IMR-90 (cell line): ENCODE measurements at regions of chr16 and their contacts with region 1.

Region 1: GRCh38 chr16:18801197-18801972 is at the start of gene ARL6IP1:
- DNase-seq: peak; percentile 99
- ATAC-seq: peak; percentile 97
- H3K4me3 ChIP-seq: peak within 1 kb of the TSS; percentile 70
- H3K27ac ChIP-seq: peak within 1 kb of the TSS; percentile 67
- H3K4me1 ChIP-seq: peaks cover 2% of the 10 kb centered on the region
- H3K27me3 ChIP-seq: no peaks in the 10 kb centered on the region
- CTCF ChIP-seq: peak; percentile 94
- POLR2A ChIP-seq: peak; percentile 100
- RAD21 ChIP-seq: peak; percentile 49
- total RNA-seq, gene ARL6IP1: 190 and 614 TPM in 2 replicates

Region 2: DNA sequence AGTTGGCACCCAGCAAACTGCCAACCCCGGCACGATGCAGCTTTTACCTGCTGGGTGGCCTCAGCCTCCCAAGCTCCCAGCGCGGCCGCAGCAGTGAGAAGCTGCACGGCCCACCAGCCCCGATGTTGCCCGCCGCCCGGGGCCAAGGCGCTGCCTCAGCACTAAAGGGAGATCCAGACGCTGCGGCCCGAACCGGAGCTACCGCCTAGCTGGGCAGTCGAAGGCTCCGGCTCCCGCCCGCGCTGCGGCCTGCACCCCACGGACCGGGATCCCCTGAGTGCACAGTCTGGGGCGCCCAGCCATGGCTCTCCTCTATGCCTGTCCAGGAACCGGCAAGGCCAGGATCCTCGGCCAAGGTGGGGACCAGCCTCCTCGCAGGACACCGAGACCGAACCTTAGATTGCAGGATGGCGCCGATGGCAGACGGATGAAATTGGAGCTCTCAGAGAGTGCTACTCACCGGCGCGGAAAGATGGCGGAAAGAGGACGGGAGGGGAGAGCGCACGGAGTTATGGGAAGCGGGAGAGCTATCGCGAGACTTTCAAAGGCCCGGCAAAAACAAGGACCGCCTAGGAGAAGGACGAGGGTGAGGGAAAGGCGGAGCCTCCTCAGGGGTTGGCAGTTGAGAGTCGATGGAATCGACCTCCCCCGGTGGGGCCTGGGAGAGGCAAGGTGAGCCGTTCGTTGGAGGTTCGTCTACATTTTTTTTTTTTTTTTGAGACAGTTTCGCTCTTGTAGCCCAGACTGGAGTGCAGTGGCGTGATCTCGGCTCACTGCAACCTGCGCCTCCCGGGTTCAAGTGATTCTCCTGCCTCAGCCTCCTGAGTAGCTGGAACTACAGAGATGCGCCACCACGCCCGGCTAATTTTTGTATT is 11.3 kb before region 1 on chr16 and contains the start of gene RPS15A:
- CTCF ChIA-PET with region 1: interaction called, 9 read pairs
- POLR2A ChIA-PET with region 1: interaction called, 8 read pairs
- dilution Hi-C with region 1: no loop called
- in situ Hi-C with region 1: no loop called
- intact Hi-C with region 1: loop called (anchors 1 kb)
- DNase-seq: peak; percentile 98
- ATAC-seq: peak; percentile 99
- H3K4me3 ChIP-seq: peak within 1 kb of the TSS; percentile 72
- H3K27ac ChIP-seq: peak within 1 kb of the TSS; percentile 81
- H3K4me1 ChIP-seq: peaks cover 2% of the 10 kb centered on the region; the same call in 1 of the 2 replicates
- H3K27me3 ChIP-seq: no peaks in the 10 kb centered on the region
- CTCF ChIP-seq: no peak
- POLR2A ChIP-seq: peak; percentile 97
- RAD21 ChIP-seq: no peak
- total RNA-seq, gene RPS15A: 2,973 and 4,619 TPM in 2 replicates

Region 3: DNA sequence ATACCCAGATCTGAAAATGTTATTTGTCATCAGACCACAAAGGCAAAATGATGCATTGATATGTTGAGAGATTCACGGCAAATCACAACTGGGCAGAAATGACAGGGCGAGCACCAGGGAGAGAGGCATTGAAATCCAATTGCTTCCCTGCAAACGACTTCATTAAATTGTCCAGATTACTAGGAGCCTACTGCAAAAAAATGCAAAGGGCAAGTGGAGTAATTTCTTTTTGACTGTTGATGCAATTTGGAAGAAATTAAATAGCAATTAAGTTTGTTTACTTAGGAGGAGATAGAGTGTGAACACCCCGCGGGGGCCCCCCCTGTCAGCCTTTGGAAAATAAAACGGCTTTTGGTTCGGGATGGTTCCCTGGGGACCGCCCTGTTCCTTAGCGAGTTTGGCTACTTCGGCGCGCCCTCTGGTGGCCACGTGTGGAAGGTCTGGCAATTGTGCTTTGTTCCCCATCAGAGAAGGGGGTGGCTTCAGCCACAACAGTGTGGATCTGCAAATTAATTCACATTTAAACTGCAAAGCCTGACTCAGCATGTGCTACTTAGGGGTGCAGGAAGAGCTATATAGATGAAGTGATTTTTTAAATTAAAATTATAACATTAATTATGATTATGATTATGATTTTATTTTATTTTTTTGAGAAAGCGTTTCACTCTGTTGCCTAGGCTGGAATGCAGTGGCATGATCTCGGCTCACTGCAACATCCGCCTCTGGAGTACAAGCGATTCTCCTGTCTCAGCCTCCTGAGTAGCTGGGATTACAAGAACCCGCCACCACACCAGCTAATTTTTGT is 167.9 kb after region 1 on chr16:
- CTCF ChIA-PET with region 1: interaction called, 3 read pairs
- POLR2A ChIA-PET with region 1: interaction called, 8 read pairs
- dilution Hi-C with region 1: no loop called
- in situ Hi-C with region 1: no loop called
- intact Hi-C with region 1: loop called (anchors 1 kb)
- DNase-seq: peak; percentile 49
- ATAC-seq: peak; percentile 100
- H3K4me3 ChIP-seq: peak overlapping the region; percentile 28; the same call in 1 of the 2 replicates
- H3K27ac ChIP-seq: no peak overlapping the region
- H3K4me1 ChIP-seq: no peaks in the 10 kb centered on the region
- H3K27me3 ChIP-seq: no peaks in the 10 kb centered on the region
- CTCF ChIP-seq: peak; percentile 84
- POLR2A ChIP-seq: no peak
- RAD21 ChIP-seq: peak; percentile 79

Region 4: DNA sequence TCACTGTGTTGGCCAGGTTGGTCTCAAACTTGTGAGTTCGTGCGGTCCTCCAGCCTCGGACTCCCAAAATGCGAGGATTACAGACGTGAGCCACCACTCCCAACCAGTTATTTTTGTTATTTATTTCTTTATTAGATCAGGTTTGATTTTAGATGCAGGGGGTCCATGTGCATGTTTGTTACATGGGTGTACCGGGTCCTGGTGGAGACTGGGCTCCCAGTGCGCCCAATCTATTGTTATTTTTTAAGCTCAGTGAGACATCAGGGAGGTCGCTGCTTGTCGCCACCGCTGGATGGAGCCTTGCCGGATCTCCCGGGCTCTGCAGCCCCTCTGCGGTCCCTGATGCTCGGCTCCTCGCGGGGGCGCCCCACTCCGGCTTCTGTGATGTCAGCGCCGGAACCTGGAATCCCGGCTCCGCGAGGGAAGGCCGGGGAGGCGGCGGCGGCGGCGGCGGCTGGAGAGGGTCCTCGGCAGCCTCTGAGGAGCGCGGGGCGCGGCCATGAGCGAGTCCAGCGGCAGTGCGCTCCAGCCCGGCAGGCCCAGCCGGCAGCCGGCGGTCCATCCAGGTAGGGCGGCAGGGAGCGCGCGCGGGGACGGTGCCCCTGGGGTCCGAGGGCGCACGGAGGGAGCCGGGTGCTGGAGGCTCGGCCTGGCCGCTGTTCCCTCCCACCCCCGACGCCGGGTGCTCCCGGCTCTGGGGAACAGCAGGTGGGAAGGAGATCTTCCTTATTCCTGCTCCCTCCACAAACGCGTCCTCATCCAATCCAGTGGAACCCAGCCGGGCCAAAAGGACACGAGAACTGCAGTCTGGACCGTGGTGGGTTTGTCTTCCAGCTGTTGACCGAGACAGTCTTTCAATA is 182.4 kb after region 1 on chr16 and contains the start of gene TMC7:
- CTCF ChIA-PET with region 1: no interaction called
- POLR2A ChIA-PET with region 1: no interaction called
- dilution Hi-C with region 1: no loop called
- in situ Hi-C with region 1: no loop called
- intact Hi-C with region 1: no loop called
- DNase-seq: peak; percentile 79
- ATAC-seq: peak; percentile 99
- H3K4me3 ChIP-seq: peak within 1 kb of the TSS; percentile 66
- H3K27ac ChIP-seq: no peak within 1 kb of the TSS; the same call in 1 of the 2 replicates
- H3K4me1 ChIP-seq: peaks cover 2% of the 10 kb centered on the region; the same call in 1 of the 2 replicates
- H3K27me3 ChIP-seq: no peaks in the 10 kb centered on the region; the same call in 1 of the 2 replicates
- CTCF ChIP-seq: peak; percentile 97
- POLR2A ChIP-seq: 0 out of 2 replicates have a peak, but pooled peaks have one; percentile 29
- RAD21 ChIP-seq: peak; percentile 82
- total RNA-seq, gene TMC7: 0.28 and 0.36 TPM in 2 replicates

Region 5: DNA sequence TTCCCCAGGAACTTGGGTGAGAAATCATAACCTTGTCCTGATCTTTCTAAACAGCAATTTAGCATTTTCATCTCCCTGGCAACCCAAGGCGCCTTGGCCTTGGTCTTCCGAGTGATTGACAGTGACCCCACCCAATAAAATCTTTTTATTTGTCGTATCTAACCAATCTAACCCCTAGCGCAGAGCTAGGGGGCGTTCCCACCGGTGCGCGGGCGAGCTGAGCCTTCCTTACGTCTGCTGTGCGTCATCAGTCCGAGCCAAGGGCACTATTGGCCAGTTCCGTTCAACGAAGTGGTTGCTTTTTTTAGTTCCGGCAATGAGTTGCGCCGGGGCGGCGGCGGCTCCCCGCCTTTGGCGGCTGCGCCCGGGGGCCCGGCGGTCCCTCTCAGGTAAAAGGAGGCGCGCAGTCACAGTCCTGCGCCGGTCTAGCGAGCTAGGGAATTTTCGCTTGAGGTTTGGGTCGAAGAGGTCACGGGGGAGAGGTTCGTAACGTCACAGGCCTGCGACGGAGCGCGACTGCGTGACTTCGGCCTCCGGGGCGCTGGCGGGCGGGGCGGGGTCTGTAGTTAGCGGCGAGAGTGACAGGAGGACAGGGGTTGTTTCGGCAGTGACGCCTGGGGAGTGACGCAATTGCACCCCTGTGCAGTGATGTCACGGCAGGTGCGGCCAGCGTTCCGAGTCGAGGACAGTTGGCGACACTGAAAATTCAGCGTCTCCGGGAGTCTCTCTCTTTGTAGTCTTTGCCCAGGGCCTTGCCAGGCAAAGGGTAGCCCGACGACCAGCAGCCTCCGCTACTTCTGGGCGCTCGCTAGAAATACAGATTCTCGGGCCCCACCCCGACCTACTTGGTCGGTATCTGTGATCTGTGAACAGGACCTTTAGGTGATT is 266.2 kb after region 1 on chr16 and contains the start of gene COQ7:
- CTCF ChIA-PET with region 1: no interaction called
- POLR2A ChIA-PET with region 1: no interaction called
- dilution Hi-C with region 1: no loop called
- in situ Hi-C with region 1: no loop called
- intact Hi-C with region 1: loop called (anchors 10 kb)
- DNase-seq: peak; percentile 100
- ATAC-seq: peak; percentile 98
- H3K4me3 ChIP-seq: peak within 1 kb of the TSS; percentile 64
- H3K27ac ChIP-seq: peak within 1 kb of the TSS; percentile 87
- H3K4me1 ChIP-seq: no peaks in the 10 kb centered on the region
- H3K27me3 ChIP-seq: no peaks in the 10 kb centered on the region
- CTCF ChIP-seq: no peak
- POLR2A ChIP-seq: peak; percentile 73; the same call in 1 of the 2 replicates
- RAD21 ChIP-seq: no peak
- total RNA-seq, gene COQ7: 10.9 and 15.0 TPM in 2 replicates